ENCODE measurements at regions of chr19 and their contacts with region 1.

Region 1: DNA sequence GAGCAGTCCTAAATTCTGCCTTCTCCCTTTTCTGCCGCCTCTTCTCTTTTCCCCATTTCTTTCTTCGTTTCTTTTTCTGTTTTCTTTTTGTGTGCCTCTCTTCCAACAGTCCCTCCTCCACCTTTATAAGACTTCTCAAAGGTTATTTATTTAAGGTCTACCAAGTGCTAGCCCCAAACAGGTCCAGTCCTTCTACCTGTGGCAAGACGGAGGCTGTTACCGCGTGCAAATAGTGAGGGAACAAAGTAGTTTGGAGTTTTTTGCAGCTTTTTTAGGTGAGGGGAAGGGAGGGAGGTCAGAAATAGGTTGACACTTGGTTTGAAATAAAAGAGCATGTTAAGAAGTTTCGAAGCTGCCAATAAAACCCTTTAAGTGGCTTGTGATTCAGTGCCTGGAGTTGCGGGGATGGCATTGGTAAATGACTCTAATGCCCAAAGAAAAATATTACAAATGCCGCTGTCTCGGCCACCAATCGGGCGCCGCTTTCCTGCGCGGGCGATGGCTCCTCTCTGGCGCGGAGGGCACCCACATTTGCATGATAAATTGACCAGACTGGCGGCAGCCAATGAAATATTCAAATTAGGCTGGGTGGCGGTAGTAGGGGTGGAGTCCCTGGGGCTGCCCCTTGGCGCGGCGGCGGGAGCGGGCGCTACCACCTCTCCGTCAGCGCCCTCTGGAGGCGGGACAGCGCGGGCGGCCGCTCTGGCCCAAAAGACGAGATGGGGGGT is 7.5 kb upstream of the TSHZ3 start:
- DNase-seq: peak in 1 of 2 experiments; percentile 87
- H3K4me3 ChIP-seq: peak overlapping the region; percentile 33 to 82 (median 48); a peak in 5 of 8 replicates
- H3K27ac ChIP-seq: no peak overlapping the region
- H3K4me1 ChIP-seq: peaks cover 11 to 30% (median 23%) of the 10 kb centered on the region in 4 experiments
- H3K27me3 ChIP-seq: peaks cover 35 to 61% (median 57%) of the 10 kb centered on the region in 4 experiments; a peak in 6 of 7 replicates
- CTCF ChIP-seq: peak; percentile 54 to 81 (median 80)
- EP300 ChIP-seq: 0 out of 3 replicates have a peak, but pooled peaks of 1 of the 2 experiments have one; percentile 20
- POLR2A ChIP-seq: no peak
- RAD21 ChIP-seq: peak; percentile 55 to 69

Region 2: DNA sequence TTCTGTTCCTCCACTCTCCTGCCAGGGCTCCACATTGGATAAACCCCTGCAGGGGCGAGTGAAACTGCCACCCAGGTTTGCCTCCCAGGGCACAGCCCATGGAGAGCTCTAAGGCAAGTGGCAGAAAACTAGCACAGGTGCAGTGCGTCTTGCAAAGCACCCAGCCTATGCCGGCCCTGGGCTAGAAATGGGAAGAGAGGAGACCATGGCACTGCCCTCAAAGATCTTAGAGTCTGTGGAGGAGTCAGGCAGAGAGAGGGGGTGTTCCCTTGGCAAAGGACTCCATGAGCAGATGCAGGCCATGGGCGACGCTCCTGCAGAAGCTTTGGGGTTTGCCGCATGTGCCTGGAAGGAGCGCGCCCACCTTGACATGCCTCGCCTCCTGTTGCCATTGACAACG is 10.3 kb after region 1 on chr19:
- CTCF ChIA-PET with region 1: interaction called, 13 read pairs
- POLR2A ChIA-PET with region 1: interaction called, 8 read pairs
- DNase-seq: no peak
- H3K4me3 ChIP-seq: no peak overlapping the region
- H3K27ac ChIP-seq: no peak overlapping the region
- H3K4me1 ChIP-seq: peaks cover 0 to 4% (median 0%) of the 10 kb centered on the region in 4 experiments; a peak in 2 of 7 replicates
- H3K27me3 ChIP-seq: no peaks in the 10 kb centered on the region
- CTCF ChIP-seq: no peak
- EP300 ChIP-seq: no peak
- POLR2A ChIP-seq: no peak
- RAD21 ChIP-seq: no peak

Measured in H1 (cell line).